ENCODE measurements at regions of chr11 and their contacts with region 1.

Region 1: DNA sequence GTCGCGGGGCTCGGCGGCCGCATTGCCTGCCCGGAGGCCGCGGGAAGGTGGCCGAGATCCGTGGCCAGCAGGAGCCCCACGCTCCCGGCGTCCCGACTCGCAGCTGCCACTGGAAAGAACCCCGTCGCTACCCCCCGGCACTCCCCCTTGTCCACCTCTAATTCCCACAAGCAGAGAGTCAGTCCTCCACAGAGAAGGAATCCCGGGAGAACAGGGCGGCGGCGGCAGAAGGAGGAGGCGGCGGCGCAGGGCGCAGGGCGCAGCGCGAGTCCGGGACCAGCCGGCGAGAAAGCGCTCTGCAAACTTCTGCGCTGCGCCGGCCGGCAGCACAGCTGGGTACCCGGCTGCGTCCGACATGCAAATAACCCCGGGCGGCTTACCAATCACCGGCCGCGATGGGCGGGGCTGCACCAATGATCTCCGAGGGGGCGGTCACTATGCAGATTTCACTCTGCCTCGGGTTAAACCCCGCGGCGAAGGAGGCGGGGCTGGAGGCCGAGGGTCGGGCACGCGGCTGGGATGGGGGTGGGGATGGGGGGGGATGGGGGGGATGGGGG is at the start of gene ABTB2:
- DNase-seq: peak; percentile 96
- CTCF ChIP-seq: no peak

Region 2: GRCh38 chr11:34250732-34251639 is 106.8 kb before region 1 on chr11:
- CTCF ChIA-PET with region 1: no interaction called
- POLR2A ChIA-PET with region 1: no interaction called
- DNase-seq: peak; percentile 56
- CTCF ChIP-seq: no peak

Region 3: GRCh38 chr11:34327804-34328631 is 29.8 kb before region 1 on chr11:
- CTCF ChIA-PET with region 1: no interaction called
- POLR2A ChIA-PET with region 1: no interaction called
- DNase-seq: no peak
- CTCF ChIP-seq: no peak

Region 4: GRCh38 chr11:34343153-34343552 is 14.6 kb before region 1 on chr11:
- CTCF ChIA-PET with region 1: interaction called, 10 read pairs
- POLR2A ChIA-PET with region 1: no interaction called
- DNase-seq: no peak
- CTCF ChIP-seq: no peak

Region 5: DNA sequence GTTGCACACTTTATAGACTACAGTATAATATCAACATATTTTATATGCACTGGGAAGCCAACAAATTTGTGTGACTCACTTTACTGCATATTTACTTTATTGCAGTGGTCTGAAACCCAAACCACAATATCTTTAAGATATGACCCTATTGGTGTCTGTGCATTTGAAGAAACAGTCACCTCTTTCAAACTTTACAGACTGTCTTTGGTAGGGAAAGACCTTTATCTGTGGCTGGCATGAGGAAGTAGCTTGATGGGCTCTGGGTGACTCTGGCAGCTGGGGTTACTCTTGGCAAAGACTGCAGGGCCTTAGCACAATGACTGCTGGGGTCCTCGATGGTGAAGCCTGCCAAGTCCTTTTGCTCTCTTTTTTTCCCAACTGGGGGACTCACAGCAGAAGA is 21.3 kb after region 1 on chr11:
- CTCF ChIA-PET with region 1: no interaction called
- POLR2A ChIA-PET with region 1: no interaction called
- DNase-seq: no peak
- CTCF ChIP-seq: no peak

Region 6: DNA sequence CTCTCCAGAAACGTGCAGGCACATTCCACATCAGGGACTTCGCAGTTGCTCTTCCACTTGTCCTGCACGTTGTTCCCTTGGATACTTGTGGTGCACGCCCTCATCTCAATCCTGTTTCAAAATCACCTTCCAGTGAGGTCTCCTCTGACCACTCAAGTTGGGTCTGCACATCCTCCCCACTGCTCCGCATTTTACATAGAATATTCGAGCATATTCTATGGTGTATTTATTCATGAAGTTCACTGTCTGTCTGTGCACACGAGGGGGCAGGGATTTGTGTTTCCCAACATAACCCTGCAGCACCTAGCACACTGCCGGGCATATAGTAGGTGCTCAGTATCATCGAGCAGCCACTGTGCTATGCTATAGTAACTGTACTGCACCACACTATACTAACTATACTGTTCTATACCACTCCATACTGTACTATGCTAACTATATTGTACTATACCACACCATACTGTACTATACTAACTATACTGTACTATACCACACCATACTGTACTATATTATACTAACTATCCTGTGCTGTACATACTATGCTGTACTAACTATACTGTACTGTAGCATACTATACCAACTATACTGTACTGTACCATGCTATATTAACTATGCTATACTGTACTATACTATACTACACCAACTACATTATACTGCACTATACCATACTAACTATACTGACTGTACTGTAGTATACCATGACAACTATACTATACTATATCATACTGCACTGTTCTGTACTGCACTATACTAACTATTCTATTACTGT is 125.5 kb after region 1 on chr11:
- CTCF ChIA-PET with region 1: no interaction called
- POLR2A ChIA-PET with region 1: no interaction called
- DNase-seq: no peak
- CTCF ChIP-seq: no peak

Measured in GM10248 (cell line).